Adrenal gland (tissue), 19 donors: ENCODE measurements at regions of chr16 and their contacts with region 1.

Region 1: GRCh38 chr16:11240636-11241473 is 15.1 kb downstream of the SOCS1 start:
- DNase-seq: no peak
- H3K4me3 ChIP-seq: no peak overlapping the region
- H3K27ac ChIP-seq: no peak overlapping the region
- H3K4me1 ChIP-seq: no peaks in the 10 kb centered on the region
- H3K27me3 ChIP-seq: no peaks in the 10 kb centered on the region
- CTCF ChIP-seq: no peak
- POLR2A ChIP-seq: no peak

Region 2: GRCh38 chr16:10964039-10964890 is 276.6 kb before region 1 on chr16:
- intact Hi-C with region 1: no loop called
- DNase-seq: peak; percentile 80 to 93 (median 87)
- H3K4me3 ChIP-seq: no peak overlapping the region
- H3K27ac ChIP-seq: peak overlapping the region in 1 of 5 donors; percentile 31
- H3K4me1 ChIP-seq: peaks cover 6 to 19% of the 10 kb centered on the region in 2 donors
- H3K27me3 ChIP-seq: no peaks in the 10 kb centered on the region
- CTCF ChIP-seq: peak; percentile 89 to 96 (median 93)
- POLR2A ChIP-seq: no peak

Region 3: GRCh38 chr16:11164482-11165270 is 76.2 kb before region 1 on chr16:
- intact Hi-C with region 1: loop called in 1 of 2 experiments (anchors 10 kb)
- DNase-seq: peak in 1 of 7 donors; percentile 70
- H3K4me3 ChIP-seq: no peak overlapping the region
- H3K27ac ChIP-seq: no peak overlapping the region
- H3K4me1 ChIP-seq: peaks cover 11 to 28% of the 10 kb centered on the region in 2 donors
- H3K27me3 ChIP-seq: no peaks in the 10 kb centered on the region
- CTCF ChIP-seq: no peak
- POLR2A ChIP-seq: no peak

Region 4: DNA sequence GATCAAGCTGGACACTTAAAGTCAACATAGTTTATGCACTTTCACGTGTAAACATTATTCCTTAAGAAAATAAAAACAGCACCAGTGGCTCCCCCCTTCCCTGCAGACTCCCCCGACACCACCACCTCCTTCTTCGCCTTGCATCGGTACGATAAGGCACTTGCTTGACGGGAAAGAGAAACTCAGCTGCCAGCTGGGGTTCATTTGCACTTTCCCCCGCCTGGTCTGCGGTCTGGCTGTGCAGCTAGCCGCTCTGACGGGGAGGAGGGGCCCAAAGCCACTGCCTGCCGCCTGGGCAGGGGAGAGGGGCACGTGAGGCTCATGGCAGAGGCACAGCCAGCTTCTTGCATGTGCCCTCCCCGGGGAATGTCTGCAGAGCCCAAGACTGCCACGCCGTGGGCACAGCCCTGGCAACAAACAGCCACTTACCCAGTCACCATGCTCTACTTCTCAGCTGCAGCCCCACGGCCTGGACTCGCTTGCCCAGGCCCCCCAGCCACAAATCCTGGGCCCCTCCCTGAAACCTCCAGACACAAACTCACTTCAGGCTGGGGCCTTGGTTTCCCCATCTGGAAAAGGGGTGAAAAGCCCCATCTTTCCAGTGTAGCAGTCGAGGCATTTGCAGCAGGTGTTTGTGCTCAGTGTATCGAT is 56.8 kb after region 1 on chr16:
- intact Hi-C with region 1: loop called in 1 of 2 experiments (anchors 10 kb)
- DNase-seq: peak; percentile 42 to 80 (median 62)
- H3K4me3 ChIP-seq: peak overlapping the region in 1 of 4 donors; percentile 27
- H3K27ac ChIP-seq: peak overlapping the region in 1 of 5 donors; percentile 17
- H3K4me1 ChIP-seq: peaks cover 0 to 7% of the 10 kb centered on the region in 2 donors
- H3K27me3 ChIP-seq: no peaks in the 10 kb centered on the region
- CTCF ChIP-seq: peak in 2 of 6 experiments; percentile 7 to 9
- POLR2A ChIP-seq: no peak